Posterior vena cava (tissue), 2 donors: ENCODE measurements at regions of chr9 and their contacts with region 1.

Region 1: DNA sequence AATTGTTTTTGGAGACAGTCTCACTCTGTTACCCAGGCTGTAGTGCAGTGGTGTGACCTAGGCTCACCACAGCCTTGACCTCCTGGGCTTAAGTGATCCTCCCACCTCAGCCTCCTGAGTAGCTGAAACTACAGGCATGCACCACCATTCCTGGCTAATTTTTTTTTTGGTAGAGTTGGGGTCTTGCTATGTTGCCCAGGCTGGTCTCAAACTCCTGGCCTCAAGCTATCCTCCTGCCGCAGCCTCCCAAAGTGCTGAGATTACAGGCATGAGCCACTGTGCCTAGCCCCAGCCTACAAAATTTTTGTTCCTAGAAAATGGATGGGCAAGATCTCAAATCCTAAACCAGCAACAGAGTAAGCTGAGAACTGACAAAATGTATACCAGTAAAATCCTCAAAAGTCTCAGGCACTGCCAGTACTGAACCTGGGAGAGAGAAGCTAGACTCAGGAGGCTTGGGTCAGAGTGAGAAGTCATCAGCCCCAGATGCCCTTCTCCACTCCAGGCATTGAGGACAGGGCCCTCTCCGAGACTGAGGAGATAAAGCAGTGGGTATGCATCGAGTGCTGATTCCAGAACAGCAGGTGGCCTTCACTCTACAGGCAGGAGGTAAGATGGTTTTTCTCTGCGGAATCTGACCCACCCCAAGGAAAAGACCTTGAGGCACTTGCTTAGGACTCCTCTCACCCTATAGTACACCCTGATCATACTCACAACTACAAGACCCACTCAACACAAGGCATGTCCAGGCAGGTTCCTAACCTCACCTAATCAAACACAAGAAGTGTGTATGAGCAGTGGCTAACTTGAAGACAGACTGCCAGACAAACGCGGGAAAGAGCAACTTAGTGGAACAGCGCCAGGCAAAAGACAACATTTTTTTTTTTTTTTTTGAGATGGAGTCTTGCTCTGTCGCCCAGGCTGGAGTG is 35.4 kb downstream of the HSD17B3 start:
- DNase-seq: no peak

Region 2: GRCh38 chr9:96255698-96256097 is 10.8 kb before region 1 on chr9:
- intact Hi-C with region 1: loop called in 1 of 2 experiments (anchors 2 kb)
- DNase-seq: no peak

Region 3: GRCh38 chr9:96279960-96280359 is 13.4 kb after region 1 on chr9:
- intact Hi-C with region 1: loop called in 1 of 2 experiments (anchors 1 kb)
- DNase-seq: no peak